ENCODE measurements at regions of chr12 and their contacts with region 1.

Region 1: DNA sequence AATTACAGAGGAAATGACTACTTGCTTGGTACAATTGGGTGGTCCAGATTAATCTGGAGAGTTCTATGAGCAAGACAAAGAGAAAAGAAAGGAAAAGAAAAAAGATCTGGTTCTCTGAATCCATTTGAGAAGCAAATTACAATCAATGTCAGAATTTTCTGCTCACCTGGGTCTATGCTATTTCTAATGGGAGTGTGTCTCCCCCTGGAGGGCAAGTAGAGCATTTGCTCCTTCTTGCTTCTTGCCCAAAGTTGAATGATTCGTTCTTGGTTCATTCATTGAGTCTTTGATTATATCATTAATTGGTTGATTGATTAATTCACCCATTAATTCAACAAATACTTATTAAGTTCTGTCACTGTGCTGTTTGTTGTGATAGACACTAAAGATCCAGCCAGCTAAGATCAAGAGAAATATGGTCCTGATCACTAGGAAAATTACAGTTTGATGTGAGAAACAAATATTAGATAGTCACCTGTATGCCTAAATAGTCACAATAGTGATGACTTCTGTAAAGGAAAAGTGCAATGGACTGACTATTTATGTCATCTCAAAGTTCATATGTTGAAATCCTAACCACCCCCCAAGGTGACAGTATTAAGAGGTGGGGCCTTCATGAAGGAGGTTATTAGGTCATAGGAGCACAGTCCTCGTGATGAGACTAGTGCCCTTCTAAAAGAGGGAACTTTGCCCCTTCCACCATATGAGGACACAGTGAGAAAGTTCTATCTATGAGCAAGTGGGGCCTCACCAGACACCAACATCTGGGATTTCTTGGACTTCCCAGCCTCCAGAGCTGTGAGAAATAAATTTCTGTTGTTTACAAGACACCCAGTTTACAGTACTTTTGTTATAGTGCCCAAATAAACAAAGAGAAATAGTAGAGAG is 8.0 kb upstream of the ASB8 start:
- DNase-seq: peak in 1 of 2 experiments; percentile 76
- H3K4me3 ChIP-seq: no peak overlapping the region
- H3K4me3 Mint-ChIP-seq: no peak overlapping the region
- H3K27ac Mint-ChIP-seq: no peak overlapping the region
- H3K4me1 ChIP-seq: no peaks in the 10 kb centered on the region
- H3K4me1 Mint-ChIP-seq: no peaks in the 10 kb centered on the region
- H3K27me3 ChIP-seq: no peaks in the 10 kb centered on the region
- H3K27me3 Mint-ChIP-seq: no peaks in the 10 kb centered on the region
- CTCF ChIP-seq: peak; percentile 92 to 96

Region 2: DNA sequence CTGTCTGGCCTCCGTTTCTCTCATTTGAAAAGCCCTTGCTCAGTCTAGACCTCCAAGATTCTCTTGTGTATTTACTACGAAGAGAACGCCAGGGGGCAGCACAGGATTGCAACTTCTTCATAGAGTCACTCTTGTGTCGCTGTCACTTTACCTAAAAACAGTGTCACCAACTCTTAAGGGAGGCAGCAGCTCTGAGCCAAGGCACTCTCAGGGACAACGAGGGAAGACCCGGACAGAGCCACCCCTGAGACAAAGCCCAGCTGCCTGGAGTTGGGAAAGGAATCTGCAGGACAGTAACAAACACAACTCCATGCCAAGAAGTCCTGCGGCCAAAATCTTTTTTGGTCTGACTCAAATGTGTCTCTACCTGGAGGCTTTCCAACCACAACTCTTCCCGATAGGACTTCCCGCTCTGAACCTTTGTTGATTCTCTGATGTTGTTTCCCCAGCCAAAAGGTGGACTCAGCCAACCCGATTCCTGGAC is 449.9 kb before region 1 on chr12:
- CTCF ChIA-PET with region 1: no interaction called
- POLR2A ChIA-PET with region 1: no interaction called
- intact Hi-C with region 1: loop called (anchors 1 kb)
- DNase-seq: peak; percentile 79 to 81
- H3K4me3 ChIP-seq: no peak overlapping the region
- H3K4me3 Mint-ChIP-seq: no peak overlapping the region
- H3K27ac Mint-ChIP-seq: no peak overlapping the region
- H3K4me1 ChIP-seq: no peaks in the 10 kb centered on the region
- H3K4me1 Mint-ChIP-seq: no peaks in the 10 kb centered on the region
- H3K27me3 ChIP-seq: no peaks in the 10 kb centered on the region
- H3K27me3 Mint-ChIP-seq: no peaks in the 10 kb centered on the region
- CTCF ChIP-seq: peak; percentile 88 to 92

Region 3: DNA sequence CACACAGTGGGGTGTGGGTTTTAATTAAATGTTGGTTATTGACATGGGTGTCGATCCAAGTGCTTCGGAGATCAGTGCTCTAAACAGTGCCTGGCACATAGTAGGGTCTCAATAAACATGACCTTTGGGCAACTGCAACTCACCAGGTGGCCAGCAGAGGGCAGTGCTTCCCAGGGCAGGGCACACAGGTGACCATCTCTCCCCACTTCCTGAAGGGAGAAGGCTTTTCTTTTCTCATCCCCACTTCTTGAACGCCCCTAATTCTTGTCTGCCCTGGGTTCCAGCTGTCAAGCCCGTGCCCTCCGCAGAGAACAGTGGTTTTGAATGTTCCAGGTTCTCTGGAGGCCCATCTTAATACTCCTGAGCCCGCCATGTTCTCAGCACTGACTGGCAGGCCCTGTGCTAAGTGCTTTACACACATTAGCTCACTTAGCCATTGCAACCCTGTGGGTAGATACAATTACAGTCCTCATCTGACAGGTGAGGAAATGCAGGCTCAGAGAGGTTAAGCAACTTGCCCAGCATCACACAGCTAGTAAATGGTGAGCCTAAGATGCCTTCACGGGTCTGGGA is 423.0 kb before region 1 on chr12:
- CTCF ChIA-PET with region 1: no interaction called
- POLR2A ChIA-PET with region 1: no interaction called
- intact Hi-C with region 1: no loop called
- DNase-seq: peak; percentile 74 to 86
- H3K4me3 ChIP-seq: no peak overlapping the region
- H3K4me3 Mint-ChIP-seq: no peak overlapping the region
- H3K27ac Mint-ChIP-seq: no peak overlapping the region
- H3K4me1 ChIP-seq: peaks cover 5% of the 10 kb centered on the region; the same call in 1 of the 2 replicates
- H3K4me1 Mint-ChIP-seq: peaks cover 18% of the 10 kb centered on the region
- H3K27me3 ChIP-seq: no peaks in the 10 kb centered on the region
- H3K27me3 Mint-ChIP-seq: no peaks in the 10 kb centered on the region
- CTCF ChIP-seq: peak; percentile 94 to 99

Region 4: DNA sequence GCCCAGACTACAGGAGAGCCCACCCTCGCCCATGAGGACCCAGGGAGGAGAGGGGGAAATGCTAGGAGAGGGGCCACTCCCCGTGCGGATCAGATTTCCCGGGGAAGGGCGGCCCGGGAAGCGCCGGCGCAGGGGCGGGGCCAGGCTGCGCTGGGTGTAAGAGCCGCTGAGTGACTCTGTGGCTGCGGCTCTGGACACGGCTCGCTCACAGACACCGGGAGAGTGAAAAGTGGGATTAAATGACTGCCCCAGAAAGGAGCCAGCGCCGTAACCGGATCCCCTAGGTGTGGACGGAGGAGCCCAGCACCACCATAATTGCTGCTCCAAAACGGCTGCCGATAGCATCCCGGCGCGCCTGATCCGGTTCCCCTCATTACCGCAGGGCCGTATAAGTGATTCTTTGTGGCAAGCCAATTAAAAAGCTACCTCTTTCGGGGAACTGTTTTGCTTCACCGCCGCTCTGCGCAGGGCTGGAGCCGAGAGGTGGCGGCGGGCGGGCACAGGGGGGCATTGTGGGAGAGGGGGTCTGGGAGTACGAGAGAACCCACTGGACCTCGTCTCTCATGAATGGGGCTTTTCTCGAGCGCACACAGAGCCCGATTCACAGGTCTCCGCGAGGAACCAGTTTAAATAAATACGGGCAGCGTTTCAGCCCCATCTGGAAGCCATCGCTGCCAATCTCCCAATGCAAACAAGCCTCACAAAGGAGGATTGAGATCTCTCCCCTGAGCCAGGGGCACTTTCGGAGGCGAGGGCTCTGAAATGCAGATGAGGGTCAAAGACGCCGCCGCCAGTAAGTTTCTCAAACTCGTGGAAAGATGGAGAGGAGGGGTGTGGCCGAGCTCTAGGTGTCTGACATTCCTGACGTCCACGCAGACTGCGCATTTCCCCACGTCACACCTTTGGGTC is 163.6 kb before region 1 on chr12:
- CTCF ChIA-PET with region 1: no interaction called
- POLR2A ChIA-PET with region 1: no interaction called
- intact Hi-C with region 1: loop called (anchors 5 kb)
- DNase-seq: peak; percentile 75
- H3K4me3 ChIP-seq: peak overlapping the region; percentile 50
- H3K4me3 Mint-ChIP-seq: peak overlapping the region; percentile 95
- H3K27ac Mint-ChIP-seq: peak overlapping the region; percentile 92
- H3K4me1 ChIP-seq: peaks cover 23% of the 10 kb centered on the region
- H3K4me1 Mint-ChIP-seq: peaks cover 8% of the 10 kb centered on the region
- H3K27me3 ChIP-seq: no peaks in the 10 kb centered on the region
- H3K27me3 Mint-ChIP-seq: no peaks in the 10 kb centered on the region
- CTCF ChIP-seq: no peak

Region 5: GRCh38 chr12:48084066-48084465 is 81.3 kb before region 1 on chr12:
- CTCF ChIA-PET with region 1: interaction called, 4 read pairs
- POLR2A ChIA-PET with region 1: no interaction called
- intact Hi-C with region 1: loop called (anchors 1 kb)
- DNase-seq: no peak
- H3K4me3 ChIP-seq: no peak overlapping the region
- H3K4me3 Mint-ChIP-seq: no peak overlapping the region
- H3K27ac Mint-ChIP-seq: no peak overlapping the region
- H3K4me1 ChIP-seq: no peaks in the 10 kb centered on the region
- H3K4me1 Mint-ChIP-seq: no peaks in the 10 kb centered on the region
- H3K27me3 ChIP-seq: no peaks in the 10 kb centered on the region
- H3K27me3 Mint-ChIP-seq: no peaks in the 10 kb centered on the region
- CTCF ChIP-seq: peak; percentile 12 to 44

Measured in Caco-2 (cell line).